Left ventricle myocardium inferior (tissue), 1 donor: ENCODE measurements at regions of chr11 and their contacts with region 1.

Region 1: DNA sequence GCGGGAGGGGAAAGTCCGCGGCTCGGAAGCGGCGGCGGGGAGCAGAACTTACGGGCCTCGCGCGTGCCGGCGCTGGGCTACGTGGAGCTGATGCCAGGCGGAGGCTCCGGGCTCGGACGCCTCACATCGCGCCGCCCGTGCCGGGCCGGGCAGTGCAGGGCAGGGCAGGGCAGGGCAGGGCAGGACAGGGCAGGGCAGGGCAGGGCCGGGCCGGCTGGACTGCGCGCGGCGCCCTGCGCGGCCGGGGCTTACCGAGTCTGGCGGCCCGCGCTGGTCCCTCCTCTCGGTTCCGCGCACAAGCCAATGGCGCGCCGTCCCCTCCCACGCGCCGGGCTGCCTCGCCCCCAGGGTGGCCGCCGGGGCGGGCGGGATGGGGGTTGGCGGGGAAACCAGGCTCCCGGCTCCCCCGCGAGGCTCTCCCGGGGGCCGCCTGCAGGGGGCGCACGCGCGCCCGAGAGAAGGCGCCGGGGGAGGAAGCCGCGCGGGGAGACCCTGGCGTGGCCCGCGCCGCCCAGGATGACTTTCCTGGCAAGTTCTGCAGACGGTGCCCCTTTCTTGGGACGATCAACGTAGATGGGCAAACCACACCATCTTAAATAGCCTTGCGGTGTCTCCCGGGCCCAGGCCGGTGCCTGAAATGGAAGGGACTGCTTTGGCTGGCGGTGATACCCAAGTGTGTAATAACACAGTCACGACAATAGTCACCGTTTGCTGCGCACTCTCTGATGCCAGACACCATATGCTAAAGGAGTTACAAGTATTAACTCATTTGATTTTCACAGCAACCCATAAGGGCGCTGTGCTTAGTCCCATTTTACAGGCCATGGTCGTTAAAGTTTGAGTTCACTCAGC is at the start of gene TP53I11:
- DNase-seq: peak; percentile 88
- H3K4me3 ChIP-seq: peak within 1 kb of the TSS; percentile 99
- H3K27ac ChIP-seq: peak within 1 kb of the TSS; percentile 89
- H3K4me1 ChIP-seq: peaks cover 82% of the 10 kb centered on the region
- H3K27me3 ChIP-seq: no peaks in the 10 kb centered on the region
- CTCF ChIP-seq: peak; percentile 91
- total RNA-seq, gene TP53I11: 39.4 TPM

Region 2: GRCh38 chr11:44596525-44597276 is 354.1 kb before region 1 on chr11:
- intact Hi-C with region 1: no loop called
- DNase-seq: no peak
- H3K4me3 ChIP-seq: no peak overlapping the region
- H3K27ac ChIP-seq: peak overlapping the region; percentile 81
- H3K4me1 ChIP-seq: peaks cover 82% of the 10 kb centered on the region
- H3K27me3 ChIP-seq: no peaks in the 10 kb centered on the region
- CTCF ChIP-seq: no peak

Region 3: GRCh38 chr11:45025716-45026492 is 75.1 kb after region 1 on chr11:
- intact Hi-C with region 1: loop called (anchors 10 kb)
- DNase-seq: peak; percentile 72
- H3K4me3 ChIP-seq: no peak overlapping the region
- H3K27ac ChIP-seq: peak overlapping the region; percentile 73
- H3K4me1 ChIP-seq: peaks cover 63% of the 10 kb centered on the region
- H3K27me3 ChIP-seq: no peaks in the 10 kb centered on the region
- CTCF ChIP-seq: no peak